ENCODE measurements at regions of chr12 and their contacts with region 1.

Region 1: GRCh38 chr12:98397316-98398105 is 117.9 kb upstream of the TMPO start:
- DNase-seq: peak; percentile 62
- ATAC-seq: peak; percentile 98
- H3K4me3 Mint-ChIP-seq: peak overlapping the region; percentile 83
- H3K27ac Mint-ChIP-seq: peak overlapping the region; percentile 27
- H3K4me1 Mint-ChIP-seq: peaks cover 33% of the 10 kb centered on the region
- H3K27me3 Mint-ChIP-seq: peaks cover 4% of the 10 kb centered on the region
- CTCF ChIP-seq: peak; percentile 32

Region 2: DNA sequence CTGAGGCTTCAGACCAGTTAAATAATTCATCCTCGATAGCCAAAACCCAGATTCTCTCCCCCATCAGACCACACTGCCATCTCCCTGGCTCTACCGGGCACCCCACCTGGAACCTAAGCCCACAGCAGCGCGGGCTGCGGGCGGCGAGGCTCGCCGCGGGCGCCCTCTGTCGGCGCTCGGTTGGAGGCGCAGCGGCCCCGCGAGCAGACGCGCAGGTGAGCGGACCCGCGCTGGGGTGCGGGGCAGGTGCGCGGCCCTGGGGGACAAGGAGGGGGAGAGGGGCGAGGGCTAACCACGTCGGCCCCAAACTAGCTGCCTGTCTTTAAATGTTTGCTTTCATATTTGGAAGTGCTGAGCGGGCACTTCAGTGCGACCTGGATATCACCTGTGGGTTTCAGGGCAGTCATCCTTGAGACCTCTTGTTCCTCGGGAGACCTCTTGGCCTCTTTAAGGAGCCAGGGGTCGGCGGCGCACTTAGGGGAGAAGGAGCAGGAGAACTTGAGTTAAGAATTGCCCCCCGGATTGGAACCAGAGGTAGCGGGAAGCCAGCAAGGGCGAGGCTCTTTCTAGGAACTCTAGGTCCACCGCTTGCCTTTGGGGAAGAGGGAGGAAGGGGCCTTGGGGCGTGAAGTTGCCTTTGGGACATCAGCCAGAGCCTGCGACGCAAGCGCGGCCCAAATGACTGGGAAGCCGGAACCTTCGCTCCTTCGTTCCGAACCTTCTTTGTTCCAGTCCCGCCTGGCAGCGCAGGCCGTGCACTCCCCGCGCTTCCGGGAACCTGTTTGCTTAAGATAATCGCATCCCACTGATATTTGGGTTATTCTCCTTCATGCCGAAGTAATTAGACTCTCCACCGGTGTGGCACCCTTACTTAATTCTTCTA is 1411.8 kb before region 1 on chr12:
- CTCF ChIA-PET with region 1: interaction called, 5 read pairs
- POLR2A ChIA-PET with region 1: no interaction called
- intact Hi-C with region 1: loop called (anchors 1 kb)
- DNase-seq: peak; percentile 37
- ATAC-seq: peak; percentile 87
- H3K4me3 Mint-ChIP-seq: peak overlapping the region; percentile 66
- H3K27ac Mint-ChIP-seq: no peak overlapping the region
- H3K4me1 Mint-ChIP-seq: peaks cover 6% of the 10 kb centered on the region
- H3K27me3 Mint-ChIP-seq: peaks cover 6% of the 10 kb centered on the region
- CTCF ChIP-seq: peak; percentile 93

Region 3: DNA sequence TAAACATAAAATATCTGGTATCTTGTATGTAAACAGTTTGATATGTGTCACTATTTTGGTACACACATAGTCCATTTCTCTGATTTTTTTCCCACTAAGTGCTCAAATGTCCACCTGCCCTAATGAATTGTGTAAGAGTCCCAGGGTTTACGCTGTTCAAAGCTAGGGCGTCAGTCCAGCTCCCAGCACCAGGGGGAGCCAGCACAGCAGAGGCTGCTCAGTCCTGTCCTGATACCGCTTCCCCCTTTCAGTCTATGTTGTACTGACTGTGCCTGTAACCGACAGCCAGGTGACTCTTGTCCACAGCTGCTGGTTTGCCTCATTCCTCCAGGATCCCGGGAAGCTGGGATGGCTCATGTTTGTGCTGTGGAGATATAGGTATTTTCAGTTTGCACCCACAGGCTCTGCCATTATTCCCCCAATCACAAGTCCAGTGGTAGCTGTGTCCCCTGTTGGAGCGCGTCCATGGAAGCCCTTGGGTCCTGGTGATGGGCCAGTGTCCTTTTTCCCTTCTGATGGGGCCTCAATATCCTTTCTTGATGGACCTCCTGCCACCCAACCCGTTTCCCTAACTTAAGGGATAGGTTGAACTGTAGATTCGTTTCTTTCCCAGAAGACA is 1248.5 kb before region 1 on chr12:
- CTCF ChIA-PET with region 1: interaction called, 7 read pairs
- POLR2A ChIA-PET with region 1: no interaction called
- intact Hi-C with region 1: loop called (anchors 1 kb)
- DNase-seq: peak; percentile 44
- ATAC-seq: peak; percentile 94
- H3K4me3 Mint-ChIP-seq: no peak overlapping the region
- H3K27ac Mint-ChIP-seq: no peak overlapping the region
- H3K4me1 Mint-ChIP-seq: no peaks in the 10 kb centered on the region
- H3K27me3 Mint-ChIP-seq: peaks cover 17% of the 10 kb centered on the region
- CTCF ChIP-seq: no peak

Region 4: GRCh38 chr12:97308576-97309198 is 1088.8 kb before region 1 on chr12:
- CTCF ChIA-PET with region 1: no interaction called
- POLR2A ChIA-PET with region 1: no interaction called
- intact Hi-C with region 1: loop called (anchors 2 kb)
- DNase-seq: no peak
- ATAC-seq: peak; percentile 49
- H3K4me3 Mint-ChIP-seq: no peak overlapping the region
- H3K27ac Mint-ChIP-seq: no peak overlapping the region
- H3K4me1 Mint-ChIP-seq: peaks cover 22% of the 10 kb centered on the region
- H3K27me3 Mint-ChIP-seq: peaks cover 23% of the 10 kb centered on the region
- CTCF ChIP-seq: peak; percentile 59

Region 5: GRCh38 chr12:97960754-97961608 is 436.5 kb before region 1 on chr12:
- CTCF ChIA-PET with region 1: no interaction called
- POLR2A ChIA-PET with region 1: no interaction called
- intact Hi-C with region 1: loop called (anchors 2 kb)
- DNase-seq: no peak
- ATAC-seq: peak; percentile 21
- H3K4me3 Mint-ChIP-seq: no peak overlapping the region
- H3K27ac Mint-ChIP-seq: no peak overlapping the region
- H3K4me1 Mint-ChIP-seq: no peaks in the 10 kb centered on the region
- H3K27me3 Mint-ChIP-seq: peaks cover 2% of the 10 kb centered on the region
- CTCF ChIP-seq: no peak

Region 6: GRCh38 chr12:98227162-98227561 is 170.3 kb before region 1 on chr12:
- CTCF ChIA-PET with region 1: no interaction called
- POLR2A ChIA-PET with region 1: no interaction called
- intact Hi-C with region 1: no loop called
- DNase-seq: no peak
- ATAC-seq: no peak
- H3K4me3 Mint-ChIP-seq: no peak overlapping the region
- H3K27ac Mint-ChIP-seq: no peak overlapping the region
- H3K4me1 Mint-ChIP-seq: no peaks in the 10 kb centered on the region
- H3K27me3 Mint-ChIP-seq: peaks cover 4% of the 10 kb centered on the region
- CTCF ChIP-seq: no peak

Region 7: DNA sequence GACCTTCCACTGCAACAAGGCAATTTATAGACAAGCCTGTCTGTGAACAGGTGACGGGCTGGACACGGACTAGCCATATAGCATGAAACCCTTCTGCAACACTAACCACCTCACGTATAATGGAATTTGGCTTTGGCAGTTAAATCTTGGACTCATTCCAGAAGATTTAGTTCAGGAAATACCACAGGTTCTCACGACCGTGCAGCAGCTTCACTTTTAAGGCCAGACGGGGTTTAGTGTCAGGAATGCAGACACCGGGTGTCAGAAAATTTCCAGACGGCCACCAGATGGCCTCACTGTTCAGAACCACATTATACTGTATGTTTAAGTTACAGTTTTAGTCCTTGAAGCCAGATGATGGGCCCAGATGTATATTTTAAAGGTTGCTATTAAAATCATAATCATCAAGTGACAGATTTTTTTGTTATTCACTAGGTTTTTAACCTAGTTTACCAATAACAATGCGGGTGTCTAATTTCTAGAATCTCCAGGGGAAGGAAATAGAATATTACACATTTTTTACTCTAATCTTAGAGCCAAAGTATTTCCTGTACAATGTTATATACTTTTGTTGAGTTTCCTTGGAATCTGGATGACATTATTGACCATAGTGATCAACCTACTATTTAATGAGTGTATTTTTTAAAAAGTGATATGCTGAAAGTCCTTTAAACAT is 27.4 kb after region 1 on chr12:
- CTCF ChIA-PET with region 1: no interaction called
- POLR2A ChIA-PET with region 1: no interaction called
- intact Hi-C with region 1: loop called (anchors 2 kb)
- DNase-seq: no peak
- ATAC-seq: peak; percentile 37
- H3K4me3 Mint-ChIP-seq: no peak overlapping the region
- H3K27ac Mint-ChIP-seq: no peak overlapping the region
- H3K4me1 Mint-ChIP-seq: peaks cover 2% of the 10 kb centered on the region
- H3K27me3 Mint-ChIP-seq: peaks cover 2% of the 10 kb centered on the region
- CTCF ChIP-seq: no peak

Region 8: DNA sequence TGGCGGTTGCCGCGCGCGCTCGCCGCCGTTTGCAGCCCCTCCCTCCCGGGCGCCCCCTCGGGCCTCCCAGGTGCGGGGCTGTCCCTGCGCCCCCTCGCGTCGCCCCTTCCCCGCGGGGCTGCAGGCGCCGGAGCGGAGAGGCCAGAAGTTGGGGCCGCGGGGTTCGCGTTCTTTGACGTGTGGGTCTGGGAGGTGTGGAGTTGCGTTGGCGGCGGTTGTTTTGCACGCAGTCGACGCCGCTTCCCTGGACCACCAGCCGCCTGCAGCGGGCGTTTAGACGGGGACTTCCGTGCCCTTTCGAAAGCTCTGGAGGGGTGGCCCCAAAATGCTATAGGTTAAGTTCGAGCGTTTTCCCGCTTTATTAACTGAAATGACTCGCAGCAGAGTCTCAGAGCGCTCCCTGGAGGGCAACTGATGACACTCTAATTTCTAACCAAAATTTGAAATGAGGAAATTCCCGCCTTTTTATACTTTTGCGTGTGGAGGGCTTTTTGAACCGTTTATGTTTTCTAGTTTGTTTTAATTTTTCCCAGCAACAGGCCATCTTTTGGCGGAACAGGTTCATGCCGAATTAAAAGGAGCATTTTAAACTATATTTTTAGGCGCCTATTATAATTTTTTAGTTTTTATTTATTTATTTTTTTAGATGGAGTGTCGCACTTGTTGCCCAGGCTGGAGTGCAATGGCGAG is 118.8 kb after region 1 on chr12:
- CTCF ChIA-PET with region 1: no interaction called
- POLR2A ChIA-PET with region 1: no interaction called
- intact Hi-C with region 1: loop called (anchors 1 kb)
- DNase-seq: peak; percentile 71
- ATAC-seq: peak; percentile 63
- H3K4me3 Mint-ChIP-seq: peak overlapping the region; percentile 98
- H3K27ac Mint-ChIP-seq: peak overlapping the region; percentile 97
- H3K4me1 Mint-ChIP-seq: peaks cover 61% of the 10 kb centered on the region
- H3K27me3 Mint-ChIP-seq: no peaks in the 10 kb centered on the region
- CTCF ChIP-seq: no peak

Region 9: GRCh38 chr12:98788396-98788795 is 390.9 kb after region 1 on chr12:
- CTCF ChIA-PET with region 1: no interaction called
- POLR2A ChIA-PET with region 1: no interaction called
- intact Hi-C with region 1: no loop called
- DNase-seq: no peak
- ATAC-seq: no peak
- H3K4me3 Mint-ChIP-seq: no peak overlapping the region
- H3K27ac Mint-ChIP-seq: no peak overlapping the region
- H3K4me1 Mint-ChIP-seq: no peaks in the 10 kb centered on the region
- H3K27me3 Mint-ChIP-seq: peaks cover 11% of the 10 kb centered on the region
- CTCF ChIP-seq: no peak

Region 10: GRCh38 chr12:99609475-99610178 is 1212.1 kb after region 1 on chr12:
- CTCF ChIA-PET with region 1: no interaction called
- POLR2A ChIA-PET with region 1: no interaction called
- intact Hi-C with region 1: no loop called
- DNase-seq: no peak
- ATAC-seq: no peak
- H3K4me3 Mint-ChIP-seq: no peak overlapping the region
- H3K27ac Mint-ChIP-seq: no peak overlapping the region
- H3K4me1 Mint-ChIP-seq: no peaks in the 10 kb centered on the region
- H3K27me3 Mint-ChIP-seq: no peaks in the 10 kb centered on the region
- CTCF ChIP-seq: no peak